Endothelial cell of umbilical vein (primary cell): ENCODE measurements at regions of chr1 and their contacts with region 1.

Region 1: GRCh38 chr1:234997201-234997895 is 131.3 kb downstream of the TOMM20 start:
- DNase-seq: peak; percentile 99
- H3K4me3 ChIP-seq: no peak overlapping the region
- H3K27ac ChIP-seq: peak overlapping the region; percentile 95
- H3K4me1 ChIP-seq: peaks cover 28% of the 10 kb centered on the region
- H3K27me3 ChIP-seq: no peaks in the 10 kb centered on the region
- CTCF ChIP-seq: no peak
- POLR2A ChIP-seq: peak; percentile 58

Region 2: GRCh38 chr1:234631721-234632125 is 365.6 kb before region 1 on chr1:
- CTCF ChIA-PET with region 1: no interaction called
- POLR2A ChIA-PET with region 1: no interaction called
- dilution Hi-C with region 1: no loop called
- intact Hi-C with region 1: loop called (anchors 1 kb)
- DNase-seq: peak; percentile 98
- H3K4me3 ChIP-seq: no peak overlapping the region
- H3K27ac ChIP-seq: peak overlapping the region; percentile 95
- H3K4me1 ChIP-seq: peaks cover 38% of the 10 kb centered on the region
- H3K27me3 ChIP-seq: no peaks in the 10 kb centered on the region
- CTCF ChIP-seq: no peak
- POLR2A ChIP-seq: no peak

Region 3: GRCh38 chr1:234925440-234926263 is 71.7 kb before region 1 on chr1:
- CTCF ChIA-PET with region 1: no interaction called
- POLR2A ChIA-PET with region 1: interaction called, 3 read pairs
- dilution Hi-C with region 1: no loop called
- intact Hi-C with region 1: loop called (anchors 1 kb)
- DNase-seq: peak; percentile 94
- H3K4me3 ChIP-seq: no peak overlapping the region
- H3K27ac ChIP-seq: peak overlapping the region; percentile 90
- H3K4me1 ChIP-seq: peaks cover 41% of the 10 kb centered on the region
- H3K27me3 ChIP-seq: no peaks in the 10 kb centered on the region
- CTCF ChIP-seq: no peak
- POLR2A ChIP-seq: no peak

Region 4: DNA sequence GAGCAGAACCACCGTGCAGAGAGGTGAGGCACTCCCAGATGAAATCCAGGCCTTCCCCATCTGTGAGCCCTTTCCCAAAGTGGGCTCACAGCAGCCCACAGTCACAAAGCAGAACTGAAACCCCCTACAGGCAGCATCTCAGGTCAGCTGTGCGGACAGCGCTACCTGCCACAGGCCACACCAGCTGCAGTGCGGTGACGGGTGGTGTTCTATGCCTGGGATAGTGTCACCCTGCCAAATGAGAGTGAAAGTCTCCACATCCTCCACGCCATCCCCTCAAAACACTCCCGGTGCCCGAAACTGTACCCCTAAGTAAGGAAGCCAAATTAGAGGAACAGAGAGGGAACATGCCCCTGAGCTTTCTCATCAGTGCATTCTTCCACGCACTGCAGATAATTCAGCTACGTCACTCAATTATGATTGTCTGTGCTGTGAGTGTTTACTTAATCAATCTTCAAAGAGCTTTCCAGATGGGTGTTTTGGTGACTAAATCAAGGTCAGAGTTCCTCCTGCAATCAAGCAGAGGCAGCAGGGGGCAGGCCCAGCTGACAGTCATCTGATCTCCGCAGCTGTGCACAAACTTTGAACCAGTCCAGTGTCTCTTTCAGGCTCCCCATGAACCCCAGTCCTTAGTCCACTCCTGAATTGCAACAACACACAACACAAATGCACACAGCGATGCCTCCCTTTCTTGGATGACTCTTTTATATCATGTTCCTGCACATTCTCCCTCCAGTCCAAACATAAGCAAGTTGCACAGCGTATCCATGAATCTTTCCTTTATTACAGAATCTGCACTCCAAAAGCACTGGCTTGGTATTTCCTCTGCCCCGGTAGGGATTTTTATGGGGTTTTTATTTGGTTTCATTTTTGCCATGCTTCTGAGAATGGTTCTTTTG is 18.7 kb before region 1 on chr1:
- CTCF ChIA-PET with region 1: interaction called, 10 read pairs
- POLR2A ChIA-PET with region 1: interaction called, 4 read pairs
- dilution Hi-C with region 1: no loop called
- intact Hi-C with region 1: loop called (anchors 2 kb)
- DNase-seq: peak; percentile 86
- H3K4me3 ChIP-seq: no peak overlapping the region
- H3K27ac ChIP-seq: peak overlapping the region; percentile 88
- H3K4me1 ChIP-seq: peaks cover 69% of the 10 kb centered on the region
- H3K27me3 ChIP-seq: no peaks in the 10 kb centered on the region
- CTCF ChIP-seq: no peak
- POLR2A ChIP-seq: no peak

Region 5: DNA sequence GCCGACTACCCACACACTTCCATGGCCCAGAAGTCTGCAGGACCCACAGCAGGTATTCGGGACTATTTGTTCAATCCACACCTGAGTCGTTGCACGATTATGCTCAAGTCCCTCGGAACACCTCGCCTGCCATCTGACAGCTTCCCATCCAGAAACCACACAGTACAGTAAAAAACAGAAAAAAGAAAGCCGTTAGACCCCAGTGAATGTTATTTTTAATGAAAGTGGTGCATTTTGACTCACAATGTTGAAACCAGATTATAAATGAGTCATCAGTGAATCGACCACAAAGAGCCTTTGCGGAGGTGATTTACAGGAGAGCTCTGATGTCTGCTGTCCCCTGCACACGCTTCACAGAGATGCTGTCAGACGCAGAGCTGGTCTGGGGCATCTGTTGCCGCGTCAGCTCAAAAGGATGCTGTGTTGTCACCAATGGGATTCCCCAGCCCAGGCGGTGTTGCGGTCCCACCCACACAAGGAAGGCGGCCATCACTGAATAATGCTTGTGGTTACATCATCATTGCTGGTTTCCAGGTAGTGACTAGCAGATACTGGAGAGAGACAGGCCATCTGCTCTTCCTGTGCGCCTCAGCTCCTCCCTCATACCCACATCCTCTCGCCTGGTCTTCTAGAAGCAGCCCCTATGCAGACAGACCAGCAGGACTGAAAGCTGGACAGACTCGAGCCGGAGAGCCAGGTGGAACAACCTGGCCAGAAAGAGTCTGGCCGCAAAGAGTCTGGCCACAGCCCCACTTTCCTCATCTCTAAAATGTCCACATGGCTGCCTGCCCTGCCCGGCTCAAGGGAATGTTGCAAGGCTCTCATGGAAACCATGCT is 14.5 kb after region 1 on chr1:
- CTCF ChIA-PET with region 1: interaction called, 11 read pairs
- POLR2A ChIA-PET with region 1: no interaction called
- dilution Hi-C with region 1: no loop called
- intact Hi-C with region 1: loop called (anchors 1 kb)
- DNase-seq: peak; percentile 64
- H3K4me3 ChIP-seq: no peak overlapping the region
- H3K27ac ChIP-seq: peak overlapping the region; percentile 82
- H3K4me1 ChIP-seq: peaks cover 29% of the 10 kb centered on the region
- H3K27me3 ChIP-seq: no peaks in the 10 kb centered on the region
- CTCF ChIP-seq: no peak
- POLR2A ChIP-seq: no peak

Region 6: DNA sequence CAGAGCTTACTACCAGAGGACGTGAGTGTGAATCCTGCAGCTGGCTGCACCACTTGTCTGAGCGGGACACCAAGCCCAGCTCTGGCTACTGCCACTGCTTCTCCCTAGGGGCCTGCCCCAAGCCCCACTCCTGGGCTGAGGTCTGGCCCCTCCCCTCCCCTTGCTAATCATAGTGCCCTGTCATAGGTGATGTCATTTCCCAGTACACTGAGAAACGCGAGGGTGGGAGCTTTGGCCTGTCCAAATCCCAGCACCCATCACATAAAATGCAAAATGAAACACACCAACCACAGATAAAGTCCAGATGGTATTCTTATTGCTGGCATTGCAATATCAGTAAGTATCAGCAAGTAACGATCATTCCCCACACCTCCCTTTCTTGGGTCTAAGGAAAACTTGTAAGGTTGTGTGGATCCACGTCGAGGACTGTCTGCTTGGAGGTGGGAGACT is 53.6 kb after region 1 on chr1:
- CTCF ChIA-PET with region 1: interaction called, 3 read pairs
- POLR2A ChIA-PET with region 1: interaction called, 3 read pairs
- dilution Hi-C with region 1: no loop called
- intact Hi-C with region 1: loop called (anchors 1 kb)
- DNase-seq: peak; percentile 18
- H3K4me3 ChIP-seq: no peak overlapping the region
- H3K27ac ChIP-seq: no peak overlapping the region
- H3K4me1 ChIP-seq: peaks cover 14% of the 10 kb centered on the region
- H3K27me3 ChIP-seq: no peaks in the 10 kb centered on the region
- CTCF ChIP-seq: no peak
- POLR2A ChIP-seq: no peak

Region 7: GRCh38 chr1:235181561-235182245 is 184.4 kb after region 1 on chr1:
- CTCF ChIA-PET with region 1: no interaction called
- POLR2A ChIA-PET with region 1: no interaction called
- dilution Hi-C with region 1: no loop called
- intact Hi-C with region 1: no loop called
- DNase-seq: no peak
- H3K4me3 ChIP-seq: no peak overlapping the region
- H3K27ac ChIP-seq: no peak overlapping the region
- H3K4me1 ChIP-seq: no peaks in the 10 kb centered on the region
- H3K27me3 ChIP-seq: no peaks in the 10 kb centered on the region
- CTCF ChIP-seq: no peak
- POLR2A ChIP-seq: no peak